Spleen (tissue), 13 donors: ENCODE measurements at regions of chr3 and their contacts with region 1.

Region 1: DNA sequence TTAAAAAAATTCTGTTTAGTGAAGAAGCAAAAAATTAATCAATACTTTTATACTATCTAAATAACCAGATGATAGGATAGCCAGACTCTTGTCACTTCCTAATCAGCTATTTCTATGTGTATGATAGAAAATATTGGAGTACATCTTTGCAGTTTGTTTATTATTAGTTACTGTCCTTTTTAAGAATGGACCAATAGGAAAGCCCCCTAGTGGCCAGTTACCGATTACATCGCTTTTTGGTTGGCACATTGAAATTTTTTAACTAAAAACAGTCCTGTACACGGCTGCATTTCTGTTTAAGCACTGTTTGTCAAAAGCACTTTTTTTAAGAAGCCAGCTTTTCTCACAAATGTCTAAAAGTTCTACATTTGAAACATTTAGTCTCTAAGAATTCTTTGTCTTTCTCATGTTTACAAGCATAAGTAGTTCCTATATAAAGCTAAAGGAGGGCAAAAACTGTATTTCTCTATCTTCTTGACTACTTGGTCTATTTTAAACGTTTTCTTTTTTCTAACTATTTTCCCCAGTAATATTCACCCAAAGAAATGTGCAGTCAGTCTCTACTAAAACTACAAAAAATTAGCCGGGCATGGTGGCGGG is 253.2 kb upstream of the LRTM1 start:
- DNase-seq: no peak
- H3K4me3 ChIP-seq: no peak overlapping the region
- H3K27ac ChIP-seq: no peak overlapping the region
- H3K4me1 ChIP-seq: no peaks in the 10 kb centered on the region
- H3K27me3 ChIP-seq: peaks cover 0 to 6% (median 0%) of the 10 kb centered on the region in 7 donors
- CTCF ChIP-seq: peak in 9 of 11 experiments; percentile 28 to 71 (median 58)
- POLR2A ChIP-seq: no peak

Region 2: DNA sequence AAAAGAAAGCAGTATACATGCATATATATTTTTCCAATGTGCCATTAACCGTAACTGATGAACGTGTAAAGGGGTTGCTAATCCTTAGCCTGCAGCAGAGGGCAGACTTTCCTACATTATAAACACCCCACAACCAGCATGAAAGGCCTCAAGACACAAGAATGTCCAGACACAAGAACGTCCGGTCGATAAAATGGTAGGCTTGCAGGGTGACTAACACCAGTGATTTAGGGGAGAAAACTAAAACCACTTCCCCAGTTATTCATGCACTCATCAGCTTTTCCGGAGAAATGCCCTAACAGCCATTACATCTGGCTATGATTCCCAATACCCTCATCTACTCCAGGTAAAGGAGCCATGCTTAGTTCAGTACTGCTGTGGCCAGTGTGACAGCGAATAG is 310.6 kb before region 1 on chr3:
- intact Hi-C with region 1: loop called (anchors 10 kb)
- DNase-seq: no peak
- H3K4me3 ChIP-seq: no peak overlapping the region
- H3K27ac ChIP-seq: no peak overlapping the region
- H3K4me1 ChIP-seq: no peaks in the 10 kb centered on the region
- H3K27me3 ChIP-seq: no peaks in the 10 kb centered on the region
- CTCF ChIP-seq: peak in 8 of 11 experiments; percentile 23 to 55 (median 40)
- POLR2A ChIP-seq: no peak

Region 3: GRCh38 chr3:55305696-55306485 is 124.9 kb after region 1 on chr3:
- intact Hi-C with region 1: no loop called
- DNase-seq: no peak
- H3K4me3 ChIP-seq: no peak overlapping the region
- H3K27ac ChIP-seq: no peak overlapping the region
- H3K4me1 ChIP-seq: no peaks in the 10 kb centered on the region
- H3K27me3 ChIP-seq: no peaks in the 10 kb centered on the region
- CTCF ChIP-seq: no peak
- POLR2A ChIP-seq: no peak

Region 4: DNA sequence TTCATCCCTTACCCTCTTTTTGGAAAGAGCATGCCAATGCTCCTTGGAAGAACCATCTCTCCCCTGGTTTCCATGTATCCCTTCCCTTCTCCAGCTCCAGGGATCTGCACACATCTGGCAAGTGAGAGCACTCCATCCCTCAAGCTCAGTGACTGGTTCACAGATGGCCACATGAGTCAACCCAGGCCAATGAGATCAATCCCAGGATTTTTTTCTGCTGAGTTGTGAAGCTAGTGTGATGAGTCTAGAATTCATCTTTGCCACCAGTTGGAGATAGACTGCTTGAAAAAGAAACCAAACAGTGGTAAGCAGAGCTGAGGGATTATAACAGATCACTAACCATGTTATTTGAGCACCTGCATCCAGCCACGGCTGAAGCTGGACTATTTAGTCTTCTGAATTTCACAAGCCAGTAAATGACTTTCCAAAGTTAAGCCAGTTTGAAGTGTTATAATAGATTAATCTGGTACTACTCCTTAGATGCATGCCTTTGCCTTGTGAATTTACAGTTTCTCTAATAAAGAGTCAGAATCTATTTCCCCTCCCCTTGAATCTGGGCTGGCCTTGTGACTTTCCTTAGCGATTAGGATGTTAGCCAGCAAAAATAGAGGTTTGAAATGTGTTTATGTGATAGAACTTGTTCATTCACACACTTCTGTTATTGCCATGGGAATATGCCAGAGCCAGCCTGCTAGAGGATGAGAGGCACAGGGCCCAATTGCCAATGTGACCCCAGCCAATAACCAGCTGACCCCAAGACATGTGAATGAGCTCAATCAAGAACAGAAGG is 146.3 kb after region 1 on chr3:
- intact Hi-C with region 1: no loop called
- DNase-seq: no peak
- H3K4me3 ChIP-seq: no peak overlapping the region
- H3K27ac ChIP-seq: no peak overlapping the region
- H3K4me1 ChIP-seq: no peaks in the 10 kb centered on the region
- H3K27me3 ChIP-seq: no peaks in the 10 kb centered on the region
- CTCF ChIP-seq: no peak
- POLR2A ChIP-seq: no peak